GM10248 (cell line): ENCODE measurements at regions of chr9 and their contacts with region 1.

Region 1: DNA sequence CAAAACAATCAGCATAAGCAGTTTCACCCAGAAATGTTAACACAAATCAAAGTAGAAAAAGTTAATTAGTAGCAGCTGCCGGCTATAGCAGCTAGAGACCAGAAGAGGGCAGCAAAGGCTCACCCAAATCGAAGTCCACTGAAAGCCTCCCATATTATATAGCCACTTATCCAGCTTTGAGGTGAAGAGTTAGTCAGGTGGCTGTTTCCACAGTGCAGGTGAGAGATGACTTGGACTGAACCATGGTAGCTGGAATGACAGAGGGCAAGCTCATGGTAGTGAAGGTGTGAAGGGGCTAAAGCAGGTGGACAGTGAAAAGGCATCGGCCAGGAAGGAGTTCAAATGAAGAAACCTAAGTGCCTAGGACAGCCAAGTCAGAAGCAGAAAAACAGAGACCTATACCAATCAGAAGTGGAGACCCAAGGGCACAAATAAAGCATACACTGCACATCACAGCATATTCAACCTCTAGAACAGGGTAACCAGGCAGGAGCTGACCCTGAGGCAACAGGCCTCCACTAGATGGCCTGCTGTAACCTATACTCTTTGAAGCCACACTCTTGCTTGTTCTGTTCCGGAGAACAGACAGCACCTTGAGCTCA is 7.2 kb upstream of the RNF38 start:
- DNase-seq: peak; percentile 55
- CTCF ChIP-seq: peak; percentile 92

Region 2: GRCh38 chr9:36345103-36345849 is 61.9 kb before region 1 on chr9:
- CTCF ChIA-PET with region 1: no interaction called
- POLR2A ChIA-PET with region 1: no interaction called
- DNase-seq: no peak
- CTCF ChIP-seq: no peak

Region 3: GRCh38 chr9:36382484-36382883 is 24.7 kb before region 1 on chr9:
- CTCF ChIA-PET with region 1: interaction called, 12 read pairs
- POLR2A ChIA-PET with region 1: no interaction called
- DNase-seq: no peak
- CTCF ChIP-seq: no peak

Region 4: GRCh38 chr9:36431078-36431477 is 23.9 kb after region 1 on chr9:
- CTCF ChIA-PET with region 1: interaction called, 40 read pairs
- POLR2A ChIA-PET with region 1: no interaction called
- DNase-seq: no peak
- CTCF ChIP-seq: no peak

Region 5: GRCh38 chr9:36450110-36450732 is 43.0 kb after region 1 on chr9:
- CTCF ChIA-PET with region 1: interaction called, 42 read pairs
- POLR2A ChIA-PET with region 1: no interaction called
- DNase-seq: peak; percentile 28
- CTCF ChIP-seq: peak; percentile 58

Region 6: DNA sequence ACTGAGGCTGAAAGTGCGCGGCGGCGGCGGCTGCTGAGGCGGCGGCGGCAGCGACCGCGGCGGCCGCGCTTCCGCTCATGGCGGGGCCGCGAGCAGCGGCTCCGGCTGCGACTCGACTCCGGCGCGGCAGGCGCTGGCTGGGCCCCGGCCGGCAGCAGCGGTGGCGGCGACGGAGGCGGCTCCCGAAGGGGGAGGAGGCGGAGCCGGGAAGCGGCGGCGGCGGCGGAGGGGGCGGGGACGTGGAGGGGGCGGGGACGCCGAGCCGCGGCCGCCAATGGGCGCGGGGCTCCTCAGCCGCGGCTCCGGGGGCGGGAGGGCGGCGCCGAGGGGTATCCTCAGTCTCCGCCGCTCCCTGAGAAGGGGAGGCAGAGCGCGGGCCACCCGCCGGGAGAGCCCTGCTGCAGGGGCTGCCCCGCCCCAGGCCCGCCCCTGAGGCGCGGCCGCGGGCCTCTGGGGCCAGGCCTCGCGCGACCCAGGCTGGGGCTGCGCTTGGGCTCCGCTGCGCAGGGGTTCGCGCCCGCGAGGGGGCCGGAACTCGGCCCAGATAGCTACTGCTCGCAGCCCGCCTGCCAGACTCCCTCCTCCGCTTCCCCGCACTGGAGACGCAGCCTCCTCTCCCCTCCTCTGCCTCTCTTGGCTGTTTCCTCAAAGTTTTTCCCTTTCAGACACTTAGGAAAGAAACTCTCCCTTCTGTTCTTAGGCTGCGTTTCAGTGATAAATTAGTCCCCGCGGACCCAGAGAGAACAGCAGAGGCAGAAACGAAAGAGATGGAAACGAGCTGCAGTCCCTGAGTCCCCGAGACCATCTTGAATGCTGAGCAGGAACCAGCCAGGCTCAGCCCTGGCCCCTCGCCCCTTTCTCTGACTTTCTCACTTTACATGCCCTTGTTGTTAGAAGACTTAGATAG is 80.5 kb after region 1 on chr9:
- CTCF ChIA-PET with region 1: interaction called, 15 read pairs
- POLR2A ChIA-PET with region 1: no interaction called
- DNase-seq: peak; percentile 95
- CTCF ChIP-seq: no peak

Region 7: GRCh38 chr9:36572515-36573418 is 165.5 kb after region 1 on chr9 and contains the start of gene MELK:
- CTCF ChIA-PET with region 1: interaction called, 14 read pairs
- POLR2A ChIA-PET with region 1: no interaction called
- DNase-seq: peak; percentile 95
- CTCF ChIP-seq: no peak

Region 8: DNA sequence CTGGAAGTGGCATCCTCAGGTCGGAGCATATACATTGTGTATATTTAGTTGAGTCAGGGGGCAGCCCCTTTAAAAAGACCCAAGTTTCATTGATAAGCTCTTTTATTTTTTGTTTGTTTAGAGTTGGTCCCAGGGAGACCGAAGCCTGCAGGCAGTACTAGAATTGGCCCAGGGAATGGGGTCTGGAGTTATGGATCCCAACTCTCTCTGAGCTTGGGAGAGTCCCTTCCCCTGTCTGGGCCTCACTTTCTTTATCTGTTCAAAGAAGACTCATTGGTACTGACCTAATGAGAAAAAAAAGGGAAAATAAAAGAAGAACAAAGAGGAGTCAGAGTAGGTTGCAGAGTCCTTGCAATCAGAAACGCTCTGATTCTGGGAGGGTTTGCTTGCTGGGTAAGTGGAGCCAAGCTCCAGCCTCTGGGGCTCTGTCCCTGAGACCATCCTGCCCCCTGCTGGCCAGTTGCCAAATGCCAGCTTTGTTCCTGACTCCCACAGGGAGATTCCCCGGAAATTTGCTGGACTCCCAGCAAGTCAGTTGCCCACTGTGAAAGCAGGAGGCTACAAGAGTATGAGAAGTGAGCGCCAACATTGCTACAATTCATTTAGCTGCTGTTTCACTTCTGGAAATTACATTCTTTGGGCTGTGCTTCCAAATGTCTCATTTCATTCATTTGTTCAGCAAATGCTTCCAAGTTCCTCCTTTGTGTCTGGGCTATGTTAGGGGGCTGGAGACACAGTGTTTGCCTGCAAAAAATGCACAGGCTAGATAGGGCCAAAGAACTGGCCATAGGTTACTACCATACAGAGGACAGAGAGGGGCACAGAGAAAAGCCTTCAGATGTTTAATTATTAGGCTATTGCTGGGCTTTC is 321.7 kb after region 1 on chr9:
- CTCF ChIA-PET with region 1: interaction called, 82 read pairs
- POLR2A ChIA-PET with region 1: interaction called, 5 read pairs
- DNase-seq: peak; percentile 76
- CTCF ChIP-seq: peak; percentile 91